Activated CD4-positive, alpha-beta T cell treated with anti-CD3 and anti-CD28 coated beads for 36 hours (primary cell): ENCODE measurements at regions of chr2 and their contacts with region 1.

Region 1: DNA sequence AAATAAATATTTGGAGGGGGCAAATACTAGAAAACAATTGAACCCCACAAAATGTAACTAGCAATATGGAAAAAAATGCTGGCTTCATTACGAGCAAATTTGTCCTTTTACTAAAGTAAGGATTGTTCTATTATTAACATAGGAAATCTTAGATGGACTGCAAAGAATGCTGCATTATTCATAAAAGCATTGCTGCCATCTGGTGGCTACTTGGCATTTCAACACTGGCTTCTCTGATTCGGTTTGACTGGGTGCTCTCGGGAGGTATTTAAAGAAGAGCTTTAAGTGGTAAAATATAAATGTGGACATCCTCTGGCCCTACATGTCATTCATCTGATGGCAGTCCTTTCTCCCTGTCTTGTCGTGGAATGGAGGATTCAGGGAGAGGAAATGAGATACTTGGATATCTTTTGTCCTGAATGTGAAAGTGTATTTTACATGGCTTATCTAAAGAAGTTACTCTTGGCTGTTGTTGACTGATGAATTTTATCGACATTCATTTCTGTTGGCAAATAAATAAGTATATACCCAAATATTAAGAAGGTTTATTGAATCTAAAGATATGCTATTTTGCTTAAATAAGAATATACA is 130.2 kb downstream of the ARHGAP15 start:
- DNase-seq: peak; percentile 81
- ATAC-seq: no peak
- H3K4me3 Mint-ChIP-seq: peak overlapping the region; percentile 53
- H3K27ac Mint-ChIP-seq: peak overlapping the region; percentile 72
- H3K4me1 Mint-ChIP-seq: peaks cover 78% of the 10 kb centered on the region
- H3K27me3 Mint-ChIP-seq: no peaks in the 10 kb centered on the region

Region 2: DNA sequence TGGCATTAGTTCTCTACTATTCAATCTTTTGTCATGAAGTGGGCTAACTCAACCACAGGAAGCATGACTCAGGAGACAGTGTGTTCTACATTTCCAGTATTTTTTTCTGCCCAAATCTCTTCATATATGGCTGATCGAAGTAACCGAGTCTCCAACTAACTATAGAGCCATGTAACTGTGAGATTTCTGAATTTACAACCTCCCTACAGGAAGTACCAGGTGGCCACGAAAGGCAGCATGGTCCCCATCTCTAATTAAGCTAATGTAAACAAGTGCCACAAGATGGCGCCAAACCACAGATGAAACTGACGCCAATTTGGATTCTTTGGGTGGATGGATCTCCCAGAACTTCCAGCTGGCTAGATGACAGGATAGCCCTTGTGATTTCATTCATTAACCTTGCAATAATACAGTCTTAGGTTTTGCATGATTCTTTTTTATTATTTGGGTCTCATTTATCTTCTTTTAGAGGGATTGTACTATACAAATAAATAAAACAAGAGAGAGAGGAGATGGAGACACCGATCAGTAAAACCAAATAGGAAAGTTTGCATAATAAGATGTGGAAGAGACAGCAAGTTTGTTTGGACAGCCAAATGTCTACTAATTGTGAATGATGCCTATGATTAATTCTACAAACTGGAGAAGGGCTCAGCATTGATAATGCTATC is 148.6 kb before region 1 on chr2:
- CTCF ChIA-PET with region 1: interaction called, 120 read pairs
- POLR2A ChIA-PET with region 1: no interaction called
- intact Hi-C with region 1: loop called (anchors 1 kb)
- DNase-seq: peak; percentile 79
- ATAC-seq: peak; percentile 83
- H3K4me3 Mint-ChIP-seq: peak overlapping the region; percentile 42
- H3K27ac Mint-ChIP-seq: peak overlapping the region; percentile 87
- H3K4me1 Mint-ChIP-seq: peaks cover 42% of the 10 kb centered on the region
- H3K27me3 Mint-ChIP-seq: no peaks in the 10 kb centered on the region

Region 3: DNA sequence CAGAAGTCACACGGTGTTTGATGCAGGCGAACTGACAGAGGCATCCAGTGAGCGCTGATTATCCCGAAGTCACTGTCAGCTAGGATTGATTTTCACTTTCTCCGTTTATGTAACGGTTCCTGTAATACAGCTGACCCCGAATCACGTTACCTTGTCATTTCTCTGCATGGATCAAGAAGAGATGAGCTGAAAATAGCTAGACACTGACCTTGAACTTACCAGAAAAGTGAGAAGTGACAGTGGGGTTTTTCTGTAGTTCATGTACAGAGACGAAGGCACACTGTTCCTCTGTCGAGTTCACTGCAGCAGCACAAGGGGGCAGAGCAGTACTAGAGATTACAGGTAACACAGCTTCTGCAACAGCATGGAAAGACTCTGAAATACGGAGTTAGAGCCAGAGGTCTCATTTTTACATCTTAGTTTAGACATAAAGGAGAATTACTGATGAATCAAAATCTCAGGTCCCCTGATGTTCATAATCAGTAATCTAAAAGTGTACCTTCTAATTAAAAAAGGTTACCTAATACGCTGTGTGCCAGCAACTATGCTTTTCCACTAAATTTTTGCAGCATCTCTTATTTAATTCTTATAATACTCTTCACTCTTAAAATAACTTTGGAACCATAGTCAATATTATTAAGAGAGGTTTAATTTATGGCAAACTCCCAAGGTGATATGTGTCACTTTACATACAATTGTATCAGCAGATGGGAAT is 97.2 kb before region 1 on chr2:
- CTCF ChIA-PET with region 1: interaction called, 125 read pairs
- POLR2A ChIA-PET with region 1: no interaction called
- intact Hi-C with region 1: loop called (anchors 1 kb)
- DNase-seq: peak; percentile 74
- ATAC-seq: peak; percentile 95
- H3K4me3 Mint-ChIP-seq: no peak overlapping the region
- H3K27ac Mint-ChIP-seq: peak overlapping the region; percentile 29
- H3K4me1 Mint-ChIP-seq: peaks cover 83% of the 10 kb centered on the region
- H3K27me3 Mint-ChIP-seq: no peaks in the 10 kb centered on the region

Region 4: DNA sequence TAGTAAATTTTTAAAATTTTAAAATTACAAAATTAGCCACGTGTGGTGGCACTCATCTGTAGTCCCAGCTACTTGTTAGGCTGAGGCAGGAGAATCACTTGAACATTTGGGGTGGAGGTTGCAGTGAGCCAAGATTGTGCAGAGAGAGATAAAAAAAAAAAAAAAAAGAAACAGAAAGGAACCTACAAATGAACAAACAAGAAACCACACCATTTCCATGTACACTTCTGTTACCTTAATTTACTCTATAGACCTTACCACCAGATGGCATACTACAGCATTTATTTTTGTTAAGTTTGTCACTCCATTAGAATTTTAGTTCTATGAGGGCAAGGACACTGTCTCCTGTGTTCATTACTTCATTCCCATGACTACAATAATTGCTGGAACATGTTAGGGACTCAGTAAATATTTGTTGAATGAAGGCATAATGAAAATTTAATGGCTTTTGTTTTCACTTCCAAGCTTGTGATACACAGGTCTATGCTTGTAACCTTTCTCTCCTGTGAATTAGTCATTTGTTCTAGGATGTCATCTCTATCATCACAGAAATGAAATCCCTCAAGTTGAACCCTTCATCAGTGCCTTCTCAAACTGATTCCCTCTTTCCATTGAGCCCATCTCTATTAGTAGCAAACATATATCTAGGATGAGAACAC is 54.2 kb before region 1 on chr2:
- CTCF ChIA-PET with region 1: interaction called, 51 read pairs
- POLR2A ChIA-PET with region 1: no interaction called
- intact Hi-C with region 1: loop called (anchors 1 kb)
- DNase-seq: no peak
- ATAC-seq: peak; percentile 83
- H3K4me3 Mint-ChIP-seq: no peak overlapping the region
- H3K27ac Mint-ChIP-seq: peak overlapping the region; percentile 73
- H3K4me1 Mint-ChIP-seq: peaks cover 50% of the 10 kb centered on the region
- H3K27me3 Mint-ChIP-seq: no peaks in the 10 kb centered on the region

Region 5: DNA sequence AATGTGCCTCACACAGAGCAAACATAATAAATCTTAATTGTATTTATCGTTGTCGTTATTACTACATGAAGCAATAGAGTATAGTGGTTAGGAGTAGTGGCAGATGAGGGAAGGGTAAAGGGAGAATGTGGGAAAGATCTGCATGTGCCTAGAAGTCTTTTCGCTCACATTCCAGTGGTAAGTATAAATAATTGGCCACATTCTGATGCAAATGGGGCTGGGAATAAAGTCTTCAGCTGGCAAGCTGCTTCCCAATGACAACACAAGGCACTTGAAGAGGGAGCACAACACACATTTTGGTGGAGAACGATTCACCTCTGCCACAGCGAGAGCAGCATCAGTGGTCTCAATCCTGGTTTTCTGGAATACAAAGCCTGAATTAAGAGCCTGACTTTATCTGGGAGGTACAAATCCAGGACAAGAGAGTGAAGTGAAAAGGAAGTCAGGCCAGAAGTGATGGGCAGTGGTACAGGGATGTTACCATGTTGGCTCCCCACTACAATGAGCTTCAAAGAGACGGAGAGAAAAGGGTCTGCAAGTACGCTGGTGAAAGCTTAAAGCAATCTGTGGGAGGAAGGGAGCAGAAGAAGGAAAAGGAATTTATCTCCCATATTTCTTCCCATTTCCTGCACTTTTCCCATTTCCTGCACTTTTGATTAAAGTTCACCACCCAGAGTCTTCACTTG is 17.9 kb before region 1 on chr2:
- CTCF ChIA-PET with region 1: interaction called, 17 read pairs
- POLR2A ChIA-PET with region 1: no interaction called
- intact Hi-C with region 1: no loop called
- DNase-seq: no peak
- ATAC-seq: no peak
- H3K4me3 Mint-ChIP-seq: no peak overlapping the region
- H3K27ac Mint-ChIP-seq: no peak overlapping the region
- H3K4me1 Mint-ChIP-seq: peaks cover 11% of the 10 kb centered on the region
- H3K27me3 Mint-ChIP-seq: no peaks in the 10 kb centered on the region

Region 6: GRCh38 chr2:143468341-143468888 is 209.0 kb after region 1 on chr2:
- CTCF ChIA-PET with region 1: no interaction called
- POLR2A ChIA-PET with region 1: no interaction called
- intact Hi-C with region 1: loop called in 1 of 2 experiments (anchors 5 kb)
- DNase-seq: no peak
- ATAC-seq: peak; percentile 83
- H3K4me3 Mint-ChIP-seq: no peak overlapping the region
- H3K27ac Mint-ChIP-seq: peak overlapping the region; percentile 52
- H3K4me1 Mint-ChIP-seq: peaks cover 39% of the 10 kb centered on the region
- H3K27me3 Mint-ChIP-seq: no peaks in the 10 kb centered on the region

Region 7: DNA sequence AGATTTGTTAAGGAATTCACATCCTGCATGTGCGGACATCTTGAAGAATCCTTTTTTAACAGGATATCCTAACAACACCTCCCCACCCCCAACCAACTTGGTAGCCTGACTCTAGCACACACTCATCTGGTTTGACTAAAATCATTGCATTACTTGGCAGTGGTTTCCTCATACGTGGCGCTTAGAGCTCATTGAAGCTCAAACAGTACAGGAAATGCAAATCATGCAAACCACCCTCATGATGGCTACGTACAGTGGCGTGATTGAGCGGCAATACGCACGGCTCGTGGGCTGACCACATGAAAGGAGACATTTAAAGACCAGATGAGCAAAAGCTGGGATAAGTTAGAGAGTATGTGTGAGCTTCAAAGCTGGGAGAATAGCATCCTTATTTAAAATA is 924.3 kb after region 1 on chr2:
- CTCF ChIA-PET with region 1: no interaction called
- POLR2A ChIA-PET with region 1: no interaction called
- intact Hi-C with region 1: loop called in 1 of 2 experiments (anchors 10 kb)
- DNase-seq: peak; percentile 89
- ATAC-seq: peak; percentile 100
- H3K4me3 Mint-ChIP-seq: peak overlapping the region; percentile 52
- H3K27ac Mint-ChIP-seq: peak overlapping the region; percentile 86
- H3K4me1 Mint-ChIP-seq: peaks cover 40% of the 10 kb centered on the region
- H3K27me3 Mint-ChIP-seq: no peaks in the 10 kb centered on the region